Sigmoid colon (tissue), 7 donors: ENCODE measurements at regions of chr13 and their contacts with region 1.

Region 1: DNA sequence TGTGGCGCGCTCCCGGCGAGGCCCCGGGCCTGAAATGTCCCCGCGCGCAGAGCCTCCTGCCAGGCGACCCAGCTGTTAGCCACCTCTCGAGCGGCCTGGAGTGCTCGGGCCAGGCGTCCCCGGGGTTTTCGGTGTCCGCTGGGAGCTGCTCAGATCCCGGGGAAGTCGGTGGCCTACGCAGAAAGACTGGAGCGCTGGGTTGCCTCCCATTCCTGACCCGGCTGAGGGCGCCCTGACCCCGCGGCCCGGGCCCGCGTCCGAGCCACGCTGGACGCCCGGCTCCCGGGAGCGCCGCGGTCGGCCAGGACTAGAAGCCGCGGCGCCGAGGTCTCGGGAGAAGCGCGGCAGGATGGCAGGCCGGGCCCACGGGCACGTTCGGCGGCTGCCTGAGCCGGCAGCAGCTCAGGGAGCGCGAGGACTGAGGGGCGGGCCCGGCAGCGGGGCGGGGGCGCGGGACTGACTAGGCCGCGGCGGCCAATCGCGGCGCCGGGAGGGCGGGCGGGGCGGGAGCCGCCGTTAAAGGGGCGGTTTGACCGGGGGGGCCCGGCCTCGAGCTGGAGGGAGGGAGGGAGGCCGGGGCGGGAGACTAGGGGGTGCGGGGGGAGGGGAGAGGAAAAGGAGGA is 1.3 kb upstream of the ZIC2 start:
- DNase-seq: no peak
- H3K4me3 ChIP-seq: peak overlapping the region; percentile 2 to 46 (median 34)
- H3K27ac ChIP-seq: no peak overlapping the region
- H3K4me1 ChIP-seq: peaks cover 0 to 44% (median 43%) of the 10 kb centered on the region in 4 donors
- H3K27me3 ChIP-seq: peaks cover 91 to 100% (median 100%) of the 10 kb centered on the region in 3 donors
- CTCF ChIP-seq: no peak
- EP300 ChIP-seq: no peak
- POLR2A ChIP-seq: no peak

Region 2: GRCh38 chr13:99237981-99238662 is 742.2 kb before region 1 on chr13:
- intact Hi-C with region 1: no loop called
- DNase-seq: no peak
- H3K4me3 ChIP-seq: no peak overlapping the region
- H3K27ac ChIP-seq: no peak overlapping the region
- H3K4me1 ChIP-seq: no peaks in the 10 kb centered on the region
- H3K27me3 ChIP-seq: no peaks in the 10 kb centered on the region
- CTCF ChIP-seq: no peak
- EP300 ChIP-seq: no peak
- POLR2A ChIP-seq: no peak

Region 3: GRCh38 chr13:100088644-100089464 is 108.5 kb after region 1 on chr13 and contains the start of gene PCCA:
- intact Hi-C with region 1: loop called (anchors 10 kb)
- DNase-seq: peak; percentile 97
- H3K4me3 ChIP-seq: peak within 1 kb of the TSS; percentile 75 to 90 (median 77)
- H3K27ac ChIP-seq: peak within 1 kb of the TSS; percentile 79 to 87 (median 82)
- H3K4me1 ChIP-seq: peaks cover 0 to 30% (median 23%) of the 10 kb centered on the region in 4 donors
- H3K27me3 ChIP-seq: no peaks in the 10 kb centered on the region
- CTCF ChIP-seq: no peak
- EP300 ChIP-seq: peak in 1 of 4 donors; percentile 44
- POLR2A ChIP-seq: peak in 1 of 2 donors; percentile 42
- total RNA-seq, gene PCCA: 42.8 to 45.6 (median 45.2) TPM